ENCODE measurements at regions of chr11 and their contacts with region 1.

Region 1: DNA sequence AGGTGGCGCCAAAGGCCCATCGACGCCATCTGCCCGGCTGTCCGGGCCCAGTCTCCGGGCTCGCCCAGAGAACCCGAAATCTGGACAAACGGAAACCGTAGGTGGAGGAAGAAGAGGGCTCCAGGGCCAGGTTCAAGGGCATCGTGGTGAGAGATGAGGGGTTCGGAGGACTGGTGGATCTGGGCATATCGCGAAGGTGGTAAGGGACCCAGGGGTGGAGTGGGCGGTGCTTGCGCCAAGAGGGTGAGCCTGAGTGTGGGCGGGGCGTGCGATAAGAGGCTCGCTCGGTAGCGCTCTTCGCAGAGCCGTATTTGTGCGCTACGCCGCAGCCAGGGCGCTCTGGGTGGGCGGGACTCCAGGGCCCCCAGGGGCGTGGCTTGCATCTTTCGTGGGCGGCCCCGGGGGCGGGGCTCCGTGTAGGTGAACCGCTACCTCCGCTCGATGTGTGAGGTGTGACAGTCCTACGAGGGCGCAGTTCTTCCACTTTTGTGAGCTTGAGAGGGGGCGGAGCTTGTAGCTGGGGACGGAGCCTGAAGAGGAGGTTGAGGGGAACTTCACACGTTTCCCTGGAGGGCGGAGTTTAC is 4.8 kb downstream of the CD248 start:
- DNase-seq: peak; percentile 95
- ATAC-seq: peak; percentile 69
- H3K4me3 ChIP-seq: peak overlapping the region; percentile 57 to 78 (median 59); a peak in 5 of 6 replicates
- H3K27ac ChIP-seq: peak overlapping the region; percentile 97
- H3K4me1 ChIP-seq: peaks cover 42% of the 10 kb centered on the region
- H3K27me3 ChIP-seq: peaks cover 0 to 3% of the 10 kb centered on the region in 2 experiments; a peak in 1 of 5 replicates
- CTCF ChIP-seq: peak; percentile 96
- EP300 ChIP-seq: no peak
- POLR2A ChIP-seq: peak in 1 of 2 experiments; percentile 62; a peak in 1 of 4 replicates
- RAD21 ChIP-seq: peak; percentile 99

Region 2: DNA sequence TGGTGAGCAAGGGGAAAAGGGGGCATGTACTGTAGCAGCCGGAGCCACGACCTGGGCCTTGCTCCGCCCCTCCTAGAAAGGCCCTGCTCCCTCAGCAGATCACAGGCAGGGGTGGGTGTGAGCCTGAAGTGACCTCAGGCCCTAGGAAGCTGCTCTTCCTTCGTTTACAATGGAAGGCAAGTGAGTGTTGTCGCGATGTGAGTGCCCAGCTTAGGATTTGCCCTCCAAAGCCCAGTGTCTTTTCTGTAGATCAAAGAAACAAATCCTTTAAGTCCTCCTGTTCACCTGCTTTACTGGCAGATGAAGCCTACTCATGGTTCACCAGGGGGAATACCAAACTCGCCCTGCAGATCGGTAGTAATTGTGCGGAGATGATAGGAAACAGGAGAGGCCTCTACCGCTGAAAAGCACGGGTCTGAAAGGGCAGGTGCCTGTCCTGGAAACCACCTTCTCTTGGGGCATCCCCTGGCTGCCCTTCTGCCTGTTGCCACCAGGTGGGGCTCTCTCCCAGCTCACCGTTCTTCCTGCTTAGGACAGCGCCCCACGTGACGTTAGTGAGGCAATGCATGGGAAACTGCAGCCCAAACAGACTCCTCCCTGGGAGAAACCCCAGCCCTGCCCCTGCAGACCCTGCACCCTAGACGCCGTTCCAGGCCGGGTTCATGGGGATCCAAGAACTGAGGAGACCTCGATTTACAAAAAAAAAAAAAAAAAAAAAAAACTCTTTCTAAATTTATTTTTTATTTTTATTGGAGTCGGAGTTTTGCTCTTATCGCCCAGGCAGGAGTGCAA is 89.5 kb before region 1 on chr11:
- CTCF ChIA-PET with region 1: no interaction called
- POLR2A ChIA-PET with region 1: no interaction called
- in situ Hi-C with region 1: no loop called
- intact Hi-C with region 1: loop called (anchors 1 kb)
- DNase-seq: peak; percentile 93
- ATAC-seq: peak; percentile 93
- H3K4me3 ChIP-seq: no peak overlapping the region
- H3K27ac ChIP-seq: no peak overlapping the region
- H3K4me1 ChIP-seq: peaks cover 5% of the 10 kb centered on the region; the same call in 1 of the 2 replicates
- H3K27me3 ChIP-seq: no peaks in the 10 kb centered on the region
- CTCF ChIP-seq: peak; percentile 99
- EP300 ChIP-seq: no peak
- POLR2A ChIP-seq: no peak
- RAD21 ChIP-seq: peak; percentile 96

Region 3: DNA sequence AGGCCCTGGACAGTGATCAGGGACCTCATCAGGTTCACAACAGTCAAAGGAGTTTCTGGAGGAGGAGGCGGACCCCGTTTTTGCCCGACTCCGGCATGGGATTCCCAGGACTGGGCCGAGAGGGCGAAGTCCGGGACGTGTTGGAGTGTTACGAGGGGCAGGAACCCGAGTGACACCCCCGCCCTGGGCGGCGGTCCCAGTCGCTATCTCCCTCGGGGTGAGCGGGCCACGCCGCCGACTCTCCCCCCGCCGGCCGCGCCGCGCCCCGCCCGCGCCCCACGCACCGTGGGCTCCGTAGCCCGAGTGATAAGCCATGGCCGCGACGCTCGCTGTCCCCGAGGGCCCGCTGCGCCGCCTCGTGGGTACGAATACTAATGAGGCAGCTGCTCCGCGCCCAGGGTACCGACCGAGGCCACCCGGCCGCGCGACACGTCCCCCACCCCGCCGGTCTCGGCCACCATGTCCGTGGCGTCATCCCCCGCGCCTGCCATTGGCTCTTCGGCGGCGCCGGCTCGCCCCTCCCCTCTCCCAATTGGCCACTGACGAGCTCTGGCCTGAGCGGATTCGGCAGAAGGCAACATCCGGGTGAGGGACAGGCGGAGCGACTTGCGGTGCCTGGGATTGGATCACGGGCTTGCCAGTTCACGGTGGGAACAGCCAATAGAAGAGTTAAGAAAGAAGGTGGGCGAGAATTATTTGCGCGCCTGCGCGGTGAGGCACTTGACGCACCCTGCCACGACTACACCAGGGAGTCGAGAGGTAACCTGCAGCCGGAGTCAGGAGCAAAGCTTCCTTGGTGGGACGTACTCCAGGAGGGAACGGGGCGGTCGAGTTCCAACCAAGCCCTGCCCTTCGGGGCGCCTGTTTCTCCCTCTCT is 23.1 kb before region 1 on chr11 and contains the start of gene YIF1A:
- CTCF ChIA-PET with region 1: interaction called, 3 read pairs
- POLR2A ChIA-PET with region 1: interaction called, 121 read pairs
- in situ Hi-C with region 1: no loop called
- intact Hi-C with region 1: no loop called
- DNase-seq: peak; percentile 99
- ATAC-seq: peak; percentile 90
- H3K4me3 ChIP-seq: peak within 1 kb of the TSS; percentile 79 to 95 (median 88)
- H3K27ac ChIP-seq: peak within 1 kb of the TSS; percentile 97
- H3K4me1 ChIP-seq: peaks cover 61% of the 10 kb centered on the region
- H3K27me3 ChIP-seq: peaks cover 0 to 22% of the 10 kb centered on the region in 2 experiments; a peak in 4 of 5 replicates
- CTCF ChIP-seq: peak; percentile 61
- EP300 ChIP-seq: no peak
- POLR2A ChIP-seq: peak in 1 of 2 experiments; percentile 93; a peak in 2 of 4 replicates
- RAD21 ChIP-seq: peak; percentile 63; the same call in 1 of the 2 replicates
- total RNA-seq, gene YIF1A: 78.9 and 145 TPM in 2 replicates

Region 4: DNA sequence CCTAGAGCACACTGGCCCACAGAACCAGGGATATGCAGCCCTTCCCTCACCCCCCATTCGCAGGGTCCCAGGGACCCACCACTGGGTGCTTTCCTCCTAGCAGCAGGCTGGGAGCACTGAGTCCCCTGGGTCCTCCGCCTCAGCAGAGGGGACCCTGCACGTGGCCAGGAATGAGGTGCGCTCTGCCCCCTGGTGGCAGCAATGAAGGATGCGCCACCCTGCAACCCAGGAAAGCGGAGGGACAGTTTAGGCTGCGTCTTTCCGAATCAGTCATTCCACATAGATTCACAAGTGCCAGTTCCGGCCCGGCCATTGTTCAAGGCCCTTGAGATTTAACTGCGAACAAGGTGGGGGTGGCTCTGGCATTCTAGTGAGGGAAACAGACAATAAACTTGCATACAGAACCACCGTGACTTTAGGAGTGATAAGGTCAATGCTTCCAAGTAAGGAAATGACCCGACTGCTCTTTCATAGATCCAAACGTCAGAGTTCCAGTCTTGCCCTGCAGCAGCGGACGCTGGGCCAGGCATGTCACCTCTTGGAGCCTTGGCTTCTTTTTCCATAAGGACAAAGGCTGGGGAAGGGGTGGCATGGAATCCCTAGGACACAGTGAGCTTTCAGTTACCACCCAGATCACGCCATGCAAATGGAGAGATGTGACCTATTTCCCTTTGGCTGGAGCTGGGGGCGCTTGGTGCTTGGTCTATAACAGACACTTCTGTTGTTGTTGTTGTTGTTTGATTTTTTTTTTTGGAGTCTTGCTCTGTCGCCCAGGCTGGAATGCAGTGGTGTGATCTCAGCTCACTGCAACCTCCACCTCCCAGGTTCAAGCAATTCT is 16.5 kb after region 1 on chr11:
- CTCF ChIA-PET with region 1: interaction called, 68 read pairs
- POLR2A ChIA-PET with region 1: interaction called, 59 read pairs
- in situ Hi-C with region 1: no loop called
- intact Hi-C with region 1: loop called (anchors 1 kb)
- DNase-seq: peak; percentile 71
- ATAC-seq: peak; percentile 85
- H3K4me3 ChIP-seq: peak overlapping the region; percentile 36 to 76 (median 47)
- H3K27ac ChIP-seq: peak overlapping the region; percentile 45
- H3K4me1 ChIP-seq: peaks cover 57% of the 10 kb centered on the region
- H3K27me3 ChIP-seq: peaks cover 0 to 17% of the 10 kb centered on the region in 2 experiments; a peak in 3 of 5 replicates
- CTCF ChIP-seq: peak; percentile 97
- EP300 ChIP-seq: no peak
- POLR2A ChIP-seq: no peak
- RAD21 ChIP-seq: peak; percentile 87

Region 5: GRCh38 chr11:66344550-66345315 is 32.7 kb after region 1 on chr11 and contains the start of gene BRMS1:
- CTCF ChIA-PET with region 1: no interaction called
- POLR2A ChIA-PET with region 1: interaction called, 27 read pairs
- in situ Hi-C with region 1: no loop called
- intact Hi-C with region 1: no loop called
- DNase-seq: peak; percentile 94
- ATAC-seq: peak; percentile 82
- H3K4me3 ChIP-seq: peak within 1 kb of the TSS; percentile 90 to 93 (median 93)
- H3K27ac ChIP-seq: peak within 1 kb of the TSS; percentile 86
- H3K4me1 ChIP-seq: peaks cover 49% of the 10 kb centered on the region
- H3K27me3 ChIP-seq: no peaks in the 10 kb centered on the region; a peak in 1 of 5 replicates
- CTCF ChIP-seq: peak; percentile 35
- EP300 ChIP-seq: no peak
- POLR2A ChIP-seq: peak; percentile 89 to 97
- RAD21 ChIP-seq: no peak
- total RNA-seq, gene BRMS1: 55.7 and 63.1 TPM in 2 replicates

Region 6: DNA sequence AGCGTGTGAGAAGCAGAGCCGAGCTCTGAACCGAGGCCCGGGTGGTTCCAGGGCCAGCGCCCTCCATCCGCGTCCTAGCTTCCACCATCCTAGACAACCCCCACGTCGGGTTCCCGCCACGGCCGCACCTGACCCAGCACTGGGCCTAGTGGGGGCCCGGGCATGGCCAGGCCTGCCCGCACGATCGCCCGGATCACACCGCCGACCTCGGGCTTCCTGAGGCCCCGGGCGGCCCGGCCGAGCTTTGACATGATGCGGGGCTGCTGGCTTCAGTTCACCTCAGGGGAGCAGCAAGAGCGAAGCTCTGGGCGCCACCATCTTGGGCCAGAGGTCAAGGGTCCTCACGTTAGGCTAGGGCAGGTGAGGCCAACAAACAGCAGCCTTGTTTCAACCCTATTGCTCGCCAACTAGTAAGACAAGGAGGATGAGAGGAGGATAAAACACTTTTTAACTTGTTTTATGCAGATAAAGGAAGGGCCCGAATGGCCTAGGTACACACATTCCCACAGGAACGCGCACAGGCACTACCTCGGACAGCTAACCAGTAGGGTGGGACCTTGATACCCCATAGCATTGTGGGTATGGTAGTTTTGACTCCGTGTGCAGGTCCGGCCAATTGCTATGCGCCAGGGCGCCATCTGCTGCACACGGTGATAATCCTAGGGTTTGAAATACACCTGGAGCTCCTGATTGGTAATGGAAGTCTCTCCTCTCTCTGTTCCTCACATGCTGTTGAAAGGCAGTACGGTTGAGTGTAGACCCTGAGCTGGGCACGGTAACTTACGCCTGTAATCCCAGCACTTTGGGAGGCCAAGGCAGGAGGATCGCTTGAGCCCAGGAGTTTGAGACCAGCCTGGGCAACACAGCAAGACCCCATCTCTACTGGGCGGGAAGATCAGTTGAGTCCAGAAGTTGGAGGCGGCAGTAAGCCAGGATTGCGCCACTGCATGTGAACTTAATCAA is 126.7 kb after region 1 on chr11 and contains the start of gene MRPL11:
- CTCF ChIA-PET with region 1: no interaction called
- POLR2A ChIA-PET with region 1: interaction called, 10 read pairs
- in situ Hi-C with region 1: no loop called
- intact Hi-C with region 1: no loop called
- DNase-seq: peak; percentile 92
- ATAC-seq: peak; percentile 94
- H3K4me3 ChIP-seq: peak within 1 kb of the TSS; percentile 78 to 89 (median 84)
- H3K27ac ChIP-seq: peak within 1 kb of the TSS; percentile 88
- H3K4me1 ChIP-seq: peaks cover 33% of the 10 kb centered on the region
- H3K27me3 ChIP-seq: peaks cover 2 to 9% of the 10 kb centered on the region in 2 experiments; a peak in 2 of 5 replicates
- CTCF ChIP-seq: peak; percentile 90
- EP300 ChIP-seq: no peak
- POLR2A ChIP-seq: peak; percentile 67 to 78; a peak in 3 of 4 replicates
- RAD21 ChIP-seq: no peak
- total RNA-seq, gene MRPL11: 176 and 220 TPM in 2 replicates

Region 7: DNA sequence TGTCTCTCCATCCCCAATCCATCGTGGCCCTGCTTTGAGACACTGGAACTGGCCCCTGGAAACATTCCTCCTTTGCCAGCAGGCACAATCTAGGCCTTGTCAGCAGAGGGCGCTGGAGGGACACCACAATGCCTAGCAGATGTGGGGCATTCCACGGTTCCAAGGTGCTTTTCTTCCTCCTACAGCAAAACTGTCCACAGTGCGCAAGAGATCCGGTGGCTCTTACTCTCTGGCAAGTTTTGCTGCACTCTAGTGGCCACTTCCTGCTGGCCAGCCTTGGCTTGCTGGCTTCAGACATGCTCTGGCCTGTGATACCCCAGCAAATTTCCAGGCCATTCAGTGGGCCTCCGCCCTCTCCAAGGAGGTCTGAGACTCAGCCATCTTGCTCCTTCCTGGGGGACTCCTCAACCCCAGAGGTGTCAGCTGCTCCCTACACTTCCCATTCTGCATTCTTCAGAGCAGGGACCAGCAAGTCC is 382.7 kb after region 1 on chr11:
- CTCF ChIA-PET with region 1: no interaction called
- POLR2A ChIA-PET with region 1: no interaction called
- in situ Hi-C with region 1: no loop called
- intact Hi-C with region 1: no loop called
- DNase-seq: peak; percentile 96
- ATAC-seq: peak; percentile 97
- H3K4me3 ChIP-seq: no peak overlapping the region
- H3K27ac ChIP-seq: no peak overlapping the region
- H3K4me1 ChIP-seq: no peaks in the 10 kb centered on the region
- H3K27me3 ChIP-seq: no peaks in the 10 kb centered on the region
- CTCF ChIP-seq: peak; percentile 97
- EP300 ChIP-seq: no peak
- POLR2A ChIP-seq: no peak
- RAD21 ChIP-seq: peak; percentile 97

Measured in HepG2 (cell line).